A549 (cell line): ENCODE measurements at regions of chr15 and their contacts with region 1.

Region 1: GRCh38 chr15:65916664-65917406 is 47.5 kb downstream of the RAB11A start:
- DNase-seq: peak; percentile 76 to 82
- ATAC-seq: peak; percentile 90 to 99
- H3K4me3 ChIP-seq: no peak overlapping the region
- H3K27ac ChIP-seq: no peak overlapping the region
- H3K4me1 ChIP-seq: 0 out of 3 replicates have a peak, but pooled peaks cover 4% of the 10 kb centered on the region
- CTCF ChIP-seq: peak; percentile 69
- EP300 ChIP-seq: no peak
- POLR2A ChIP-seq: no peak
- RAD21 ChIP-seq: peak; percentile 87 to 88

Region 2: DNA sequence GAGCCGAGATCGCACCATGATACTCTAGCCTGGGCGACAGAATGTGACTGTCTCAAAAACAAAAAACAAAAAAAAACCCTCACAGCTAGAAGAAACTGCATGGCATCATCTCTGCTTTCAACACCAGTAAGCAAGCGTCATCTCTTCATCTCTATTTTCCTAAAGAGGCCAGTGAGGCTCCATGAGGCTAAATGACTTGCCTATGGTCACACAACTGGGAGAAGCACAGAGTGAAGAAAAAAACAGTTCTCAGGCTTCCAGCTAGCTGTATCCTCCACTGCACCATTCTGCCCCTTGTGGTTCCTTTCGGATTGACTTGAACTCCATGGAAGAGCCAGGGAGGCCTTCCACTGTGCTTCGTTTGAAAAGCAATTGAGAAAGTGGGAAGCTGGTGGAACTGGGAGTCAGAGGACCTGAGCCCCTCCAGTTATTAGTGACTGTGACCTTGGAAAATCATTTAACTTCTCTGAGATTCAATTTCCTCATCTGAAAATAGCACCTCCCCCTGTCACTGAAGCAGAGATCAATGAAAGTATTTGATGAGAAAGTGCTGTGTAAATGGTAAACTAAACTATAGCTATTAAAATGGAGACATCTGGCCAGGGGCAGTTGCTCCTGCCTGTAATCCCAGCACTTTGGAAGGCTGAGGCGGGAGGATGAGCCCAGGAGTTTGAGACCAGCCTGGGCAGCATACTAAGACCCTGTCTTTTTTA is 92.6 kb before region 1 on chr15:
- CTCF ChIA-PET with region 1: no interaction called
- POLR2A ChIA-PET with region 1: no interaction called
- DNase-seq: peak; percentile 82 to 88
- ATAC-seq: peak; percentile 98 to 99
- H3K4me3 ChIP-seq: no peak overlapping the region
- H3K27ac ChIP-seq: peak overlapping the region in 1 of 2 experiments; percentile 11; a peak in 2 of 6 replicates
- H3K4me1 ChIP-seq: peaks cover 27% of the 10 kb centered on the region
- CTCF ChIP-seq: peak; percentile 70
- EP300 ChIP-seq: no peak
- POLR2A ChIP-seq: no peak
- RAD21 ChIP-seq: peak; percentile 68 to 72

Region 3: DNA sequence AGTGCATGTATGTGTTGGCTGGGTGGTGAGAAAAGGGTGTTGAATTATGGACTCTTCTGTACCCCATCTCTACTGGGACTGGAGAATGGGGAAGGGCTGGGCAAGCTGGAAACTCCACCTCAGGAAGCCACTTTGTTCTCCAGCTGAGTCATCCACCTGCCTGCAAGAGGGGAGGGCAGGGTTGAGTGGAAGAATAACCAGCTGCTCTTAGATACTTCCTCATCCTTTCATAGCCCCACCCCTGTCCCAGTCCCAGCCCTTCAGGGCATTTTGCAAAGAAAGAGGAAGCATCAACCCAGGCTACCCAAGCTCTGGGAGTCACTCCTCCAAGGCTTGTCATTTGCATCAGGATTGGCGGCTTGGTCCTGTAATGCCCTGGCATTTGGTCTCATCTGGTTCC is 14.5 kb before region 1 on chr15:
- CTCF ChIA-PET with region 1: interaction called, 12 read pairs
- POLR2A ChIA-PET with region 1: no interaction called
- DNase-seq: peak; percentile 73 to 84
- ATAC-seq: peak; percentile 89 to 90
- H3K4me3 ChIP-seq: no peak overlapping the region
- H3K27ac ChIP-seq: peak overlapping the region; percentile 50 to 69
- H3K4me1 ChIP-seq: peaks cover 30% of the 10 kb centered on the region
- CTCF ChIP-seq: no peak
- EP300 ChIP-seq: no peak
- POLR2A ChIP-seq: no peak
- RAD21 ChIP-seq: no peak

Region 4: GRCh38 chr15:65930134-65930533 is 13.3 kb after region 1 on chr15:
- CTCF ChIA-PET with region 1: interaction called, 26 read pairs
- POLR2A ChIA-PET with region 1: no interaction called
- DNase-seq: no peak
- ATAC-seq: no peak
- H3K4me3 ChIP-seq: no peak overlapping the region
- H3K27ac ChIP-seq: no peak overlapping the region
- H3K4me1 ChIP-seq: no peaks in the 10 kb centered on the region
- CTCF ChIP-seq: no peak
- EP300 ChIP-seq: no peak
- POLR2A ChIP-seq: no peak
- RAD21 ChIP-seq: no peak

Region 5: GRCh38 chr15:65952425-65953053 is 35.7 kb after region 1 on chr15:
- CTCF ChIA-PET with region 1: interaction called, 12 read pairs
- POLR2A ChIA-PET with region 1: no interaction called
- DNase-seq: peak; percentile 47 to 58
- ATAC-seq: peak; percentile 73
- H3K4me3 ChIP-seq: no peak overlapping the region
- H3K27ac ChIP-seq: no peak overlapping the region
- H3K4me1 ChIP-seq: peaks cover 8% of the 10 kb centered on the region; the same call in 1 of the 3 replicates
- CTCF ChIP-seq: no peak
- EP300 ChIP-seq: no peak
- POLR2A ChIP-seq: no peak
- RAD21 ChIP-seq: no peak

Region 6: DNA sequence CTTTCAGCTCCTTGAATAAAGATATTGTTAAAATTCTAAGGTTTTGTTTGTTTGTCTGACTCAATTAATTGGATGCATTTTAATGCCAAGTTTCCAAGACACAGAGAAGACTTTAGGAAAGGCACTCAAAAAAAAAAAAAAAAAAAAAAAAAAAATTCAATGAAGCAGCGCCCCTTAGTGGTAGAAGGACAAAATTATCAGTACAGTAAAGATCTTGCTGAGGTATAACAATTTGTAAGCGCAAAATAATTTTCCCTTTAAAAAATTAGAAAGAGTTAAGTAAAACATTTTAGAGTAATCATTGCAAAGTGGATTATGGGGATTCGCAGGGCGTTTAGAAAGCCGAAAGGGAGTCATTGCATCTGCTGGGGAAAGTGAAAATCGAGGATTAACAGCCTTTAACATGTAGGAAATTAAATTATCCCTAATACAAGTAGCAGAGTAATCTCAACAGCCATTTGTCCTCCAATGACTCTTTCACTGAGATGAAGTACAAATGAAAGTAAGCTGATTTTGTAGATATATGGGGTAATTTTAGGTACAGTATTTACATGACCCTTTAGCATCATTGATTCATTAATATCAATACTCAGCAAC is 370.7 kb after region 1 on chr15:
- CTCF ChIA-PET with region 1: interaction called, 11 read pairs
- POLR2A ChIA-PET with region 1: no interaction called
- DNase-seq: peak; percentile 27 to 37
- ATAC-seq: peak; percentile 56 to 69; a peak in 3 of 6 replicates
- H3K4me3 ChIP-seq: no peak overlapping the region
- H3K27ac ChIP-seq: no peak overlapping the region
- H3K4me1 ChIP-seq: peaks cover 13% of the 10 kb centered on the region
- CTCF ChIP-seq: peak; percentile 85
- EP300 ChIP-seq: no peak
- POLR2A ChIP-seq: no peak
- RAD21 ChIP-seq: peak; percentile 65 to 72